ENCODE measurements at regions of chr11 and their contacts with region 1.

Region 1: GRCh38 chr11:118791111-118791965 is at the start of gene DDX6:
- DNase-seq: peak; percentile 73 to 85
- H3K4me3 ChIP-seq: peak within 1 kb of the TSS; percentile 98
- H3K27ac ChIP-seq: peak within 1 kb of the TSS; percentile 85
- H3K4me1 ChIP-seq: peaks cover 20% of the 10 kb centered on the region
- H3K27me3 ChIP-seq: no peaks in the 10 kb centered on the region
- CTCF ChIP-seq: peak; percentile 53
- total RNA-seq, gene DDX6: 73.1 and 84.4 TPM in 2 replicates

Region 2: GRCh38 chr11:118689851-118690552 is 101.3 kb before region 1 on chr11:
- CTCF ChIA-PET with region 1: no interaction called
- POLR2A ChIA-PET with region 1: no interaction called
- intact Hi-C with region 1: loop called (anchors 1 kb)
- DNase-seq: peak; percentile 82 to 92
- H3K4me3 ChIP-seq: peak overlapping the region; percentile 61
- H3K27ac ChIP-seq: no peak overlapping the region
- H3K4me1 ChIP-seq: peaks cover 5% of the 10 kb centered on the region
- H3K27me3 ChIP-seq: no peaks in the 10 kb centered on the region
- CTCF ChIP-seq: peak; percentile 91

Region 3: DNA sequence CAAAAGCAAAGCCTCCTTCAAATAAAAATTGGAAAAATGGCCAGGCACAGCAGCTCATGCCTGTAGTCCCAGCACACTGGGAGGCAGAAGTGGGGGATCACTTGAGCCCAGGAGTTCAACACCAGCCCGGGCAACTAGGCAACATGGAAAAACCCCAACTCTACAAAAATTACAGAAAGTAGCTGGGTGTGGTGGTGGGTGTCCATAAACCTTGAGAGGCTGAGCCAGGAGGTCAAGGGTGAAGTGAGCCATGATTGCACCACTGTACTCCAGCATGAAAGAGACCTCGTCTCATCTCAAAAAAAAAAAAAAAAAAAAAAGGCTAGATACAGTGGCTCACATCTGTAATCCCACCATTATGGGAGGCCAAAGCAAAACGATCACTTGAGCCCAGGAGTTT is 22.6 kb before region 1 on chr11:
- CTCF ChIA-PET with region 1: interaction called, 3 read pairs
- POLR2A ChIA-PET with region 1: interaction called, 11 read pairs
- intact Hi-C with region 1: no loop called
- DNase-seq: no peak
- H3K4me3 ChIP-seq: no peak overlapping the region
- H3K27ac ChIP-seq: peak overlapping the region; percentile 7; the same call in 1 of the 2 replicates
- H3K4me1 ChIP-seq: 0 out of 2 replicates have a peak, but pooled peaks cover 7% of the 10 kb centered on the region
- H3K27me3 ChIP-seq: no peaks in the 10 kb centered on the region
- CTCF ChIP-seq: no peak

Region 4: GRCh38 chr11:118956094-118956846 is 164.9 kb after region 1 on chr11 and contains the start of gene UPK2:
- CTCF ChIA-PET with region 1: no interaction called
- POLR2A ChIA-PET with region 1: no interaction called
- intact Hi-C with region 1: loop called (anchors 1 kb)
- DNase-seq: peak; percentile 92 to 93
- H3K4me3 ChIP-seq: peak within 1 kb of the TSS; percentile 49
- H3K27ac ChIP-seq: peak within 1 kb of the TSS; percentile 62
- H3K4me1 ChIP-seq: peaks cover 26% of the 10 kb centered on the region
- H3K27me3 ChIP-seq: no peaks in the 10 kb centered on the region
- CTCF ChIP-seq: peak; percentile 97
- total RNA-seq, gene UPK2: 17.1 and 23.2 TPM in 2 replicates

Region 5: GRCh38 chr11:118997627-118998387 is 206.5 kb after region 1 on chr11 and contains the start of gene CENATAC:
- CTCF ChIA-PET with region 1: no interaction called
- POLR2A ChIA-PET with region 1: interaction called, 18 read pairs
- intact Hi-C with region 1: no loop called
- DNase-seq: peak; percentile 82 to 89
- H3K4me3 ChIP-seq: peak within 1 kb of the TSS; percentile 86
- H3K27ac ChIP-seq: peak within 1 kb of the TSS; percentile 74
- H3K4me1 ChIP-seq: peaks cover 33% of the 10 kb centered on the region
- H3K27me3 ChIP-seq: no peaks in the 10 kb centered on the region
- CTCF ChIP-seq: no peak
- total RNA-seq, gene CENATAC: 61.7 and 73.9 TPM in 2 replicates

Region 6: DNA sequence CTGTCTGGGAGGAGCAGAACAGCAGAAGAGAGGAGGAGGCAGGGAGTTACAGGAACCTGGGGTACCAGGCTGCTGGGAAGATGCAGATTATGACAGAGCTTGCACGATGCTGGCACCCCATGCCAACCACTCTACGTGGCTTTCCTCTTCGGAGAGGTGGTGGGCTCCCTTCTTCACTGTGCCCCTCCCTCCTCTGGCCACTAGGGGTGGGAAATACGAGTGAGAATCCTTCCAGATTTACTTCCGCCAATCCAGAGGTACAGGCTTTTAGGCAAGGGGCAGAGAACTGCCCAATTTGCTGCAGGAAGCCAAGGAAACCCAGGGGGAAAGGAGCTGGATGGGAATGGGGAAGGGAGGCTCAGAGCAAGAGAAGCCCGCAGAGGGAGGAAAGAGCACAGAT is 253.4 kb after region 1 on chr11:
- CTCF ChIA-PET with region 1: no interaction called
- POLR2A ChIA-PET with region 1: no interaction called
- intact Hi-C with region 1: no loop called
- DNase-seq: peak in 1 of 2 experiments; percentile 21
- H3K4me3 ChIP-seq: no peak overlapping the region
- H3K27ac ChIP-seq: no peak overlapping the region
- H3K4me1 ChIP-seq: no peaks in the 10 kb centered on the region
- H3K27me3 ChIP-seq: no peaks in the 10 kb centered on the region
- CTCF ChIP-seq: peak; percentile 47